Activated CD4-positive, alpha-beta T cell treated with anti-CD3 and anti-CD28 coated beads, Interleukin-2, amount 10 ng/mL, durations not matched to agents 7 days and 5 days (primary cell): ENCODE measurements at regions of chr4 and their contacts with region 1.

Region 1: DNA sequence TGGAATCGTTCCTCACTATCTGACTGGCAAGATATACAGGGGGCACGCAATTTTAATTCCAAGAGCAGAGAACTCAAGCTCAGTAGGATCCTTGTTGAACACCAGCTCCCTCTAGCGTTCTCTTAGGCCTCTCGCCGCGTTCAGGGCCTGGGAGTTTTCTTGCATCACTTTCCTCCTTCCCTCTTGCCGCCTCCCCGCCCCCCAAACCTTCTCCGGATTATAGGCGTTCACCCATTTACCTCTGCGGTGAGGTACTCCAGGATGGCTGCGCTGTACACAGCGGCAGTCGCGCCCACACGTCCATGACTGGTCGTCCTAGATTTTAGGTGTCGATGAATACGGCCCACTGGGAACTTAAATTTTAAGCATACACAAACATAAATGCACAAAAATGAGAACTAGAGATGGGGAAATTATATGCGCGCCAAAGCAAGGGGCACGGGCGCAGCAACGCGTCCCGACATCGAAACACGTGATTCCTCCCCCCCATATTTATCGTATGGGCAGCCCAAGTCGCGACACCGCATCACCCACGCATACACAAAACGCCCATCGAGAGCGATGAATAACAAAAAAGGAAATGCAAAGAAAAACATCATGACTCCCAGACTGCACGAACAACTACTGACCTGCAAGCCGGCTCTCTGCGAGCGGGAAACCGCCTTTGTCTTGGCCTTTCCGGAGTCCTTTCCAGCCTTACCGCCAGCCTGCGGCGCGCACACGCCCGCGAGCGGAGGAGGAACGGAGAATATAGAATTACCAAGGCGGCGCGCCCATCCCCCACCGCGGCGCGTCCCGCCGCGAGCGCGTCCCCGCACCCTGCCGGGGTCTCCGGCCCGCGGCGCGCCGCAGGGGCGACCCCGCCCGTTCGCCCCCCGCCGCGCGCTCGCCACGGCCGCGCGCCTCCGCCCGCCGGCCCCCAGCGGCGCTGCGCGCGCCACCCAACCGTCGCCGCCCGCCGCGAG is 759 bp downstream of the H2AZ1 start:
- DNase-seq: peak; percentile 94
- H3K4me3 Mint-ChIP-seq: no peak overlapping the region
- H3K27ac Mint-ChIP-seq: no peak overlapping the region
- H3K4me1 Mint-ChIP-seq: peaks cover 30% of the 10 kb centered on the region
- H3K27me3 Mint-ChIP-seq: no peaks in the 10 kb centered on the region

Region 2: DNA sequence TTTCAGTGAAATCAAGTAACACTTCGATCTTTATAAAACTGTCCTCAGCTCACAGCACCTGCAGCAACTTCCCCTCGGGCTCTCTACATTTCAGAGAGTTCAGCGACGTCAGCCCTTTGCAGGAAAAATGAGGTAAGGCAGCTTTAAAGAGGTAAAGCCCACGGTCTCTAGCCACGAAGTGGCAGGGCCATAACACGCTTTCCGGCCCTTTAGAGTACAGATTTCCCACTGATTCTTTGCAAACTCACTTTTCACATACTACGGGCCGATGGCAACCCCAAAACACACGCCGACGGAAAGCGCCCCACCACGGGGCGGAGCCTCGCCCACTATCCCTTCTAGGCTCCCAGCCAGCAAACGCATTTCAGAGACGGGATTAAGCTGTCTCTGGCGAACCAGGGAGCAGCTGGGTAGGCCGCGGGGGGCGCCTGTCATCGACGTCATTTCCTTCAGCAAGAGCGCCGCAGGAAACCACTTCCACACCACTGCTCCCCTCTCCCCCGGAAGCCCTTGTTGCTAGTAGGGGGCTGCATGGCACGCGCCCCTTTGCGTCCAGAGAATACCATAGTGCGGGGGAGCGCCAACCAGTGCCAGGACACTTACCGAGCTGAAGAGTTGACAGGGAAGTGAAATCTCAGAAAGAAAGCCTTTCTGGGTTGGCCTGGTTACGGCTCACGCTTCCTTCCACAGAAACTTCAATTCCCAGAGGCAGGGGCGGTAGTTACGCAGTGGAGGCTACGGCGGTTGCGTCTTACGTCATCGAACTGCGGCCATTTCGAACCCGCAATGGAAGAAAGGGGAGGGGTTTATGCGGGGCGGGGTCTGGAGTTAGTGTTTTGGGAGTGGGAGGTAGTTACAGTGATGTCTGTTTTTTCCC is 385.8 kb before region 1 on chr4 and contains the start of gene TRMT10A:
- CTCF ChIA-PET with region 1: interaction called, 13 read pairs
- POLR2A ChIA-PET with region 1: no interaction called
- DNase-seq: peak; percentile 95
- H3K4me3 Mint-ChIP-seq: peak within 1 kb of the TSS; percentile 98
- H3K27ac Mint-ChIP-seq: peak within 1 kb of the TSS; percentile 100
- H3K4me1 Mint-ChIP-seq: peaks cover 34% of the 10 kb centered on the region
- H3K27me3 Mint-ChIP-seq: peaks cover 25% of the 10 kb centered on the region
- total RNA-seq, gene TRMT10A: 7.9 to 10.5 TPM

Region 3: DNA sequence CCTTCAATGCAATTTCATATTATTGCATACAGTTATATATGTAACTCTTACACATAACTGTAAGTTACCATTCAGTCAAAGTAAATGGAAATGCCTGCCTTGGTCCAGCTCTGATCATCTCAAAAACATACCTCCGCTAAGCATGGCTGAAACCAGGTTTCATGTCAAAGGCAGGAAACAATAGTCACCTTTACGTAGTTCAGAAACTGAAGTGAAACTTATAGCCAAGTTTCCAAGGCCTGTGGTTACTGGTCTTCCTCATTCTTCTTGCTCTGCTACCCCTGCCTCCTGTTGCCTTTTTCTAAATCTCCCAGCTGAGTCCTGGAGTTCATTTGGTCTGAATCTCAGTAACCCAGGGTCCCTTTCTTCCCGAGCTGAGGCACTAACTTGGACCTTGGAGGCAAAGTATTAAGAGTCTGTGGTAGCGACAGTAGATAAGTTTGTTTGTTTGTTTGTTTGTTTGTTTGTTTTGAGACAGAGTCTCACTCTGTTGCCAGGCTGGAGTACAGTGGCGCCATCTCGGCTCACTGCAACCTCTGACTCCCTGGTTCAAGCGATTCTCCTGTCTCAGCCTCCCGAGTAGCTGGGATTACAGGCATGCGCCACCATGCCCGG is 101.8 kb before region 1 on chr4:
- CTCF ChIA-PET with region 1: interaction called, 10 read pairs
- POLR2A ChIA-PET with region 1: no interaction called
- DNase-seq: peak; percentile 47
- H3K4me3 Mint-ChIP-seq: peak overlapping the region; percentile 55
- H3K27ac Mint-ChIP-seq: peak overlapping the region; percentile 97
- H3K4me1 Mint-ChIP-seq: peaks cover 77% of the 10 kb centered on the region
- H3K27me3 Mint-ChIP-seq: no peaks in the 10 kb centered on the region

Region 4: GRCh38 chr4:99894161-99894997 is 54.9 kb before region 1 on chr4 and contains the start of gene LAMTOR3:
- CTCF ChIA-PET with region 1: interaction called, 5 read pairs
- POLR2A ChIA-PET with region 1: interaction called, 12 read pairs
- DNase-seq: peak; percentile 93
- H3K4me3 Mint-ChIP-seq: peak within 1 kb of the TSS; percentile 97
- H3K27ac Mint-ChIP-seq: peak within 1 kb of the TSS; percentile 96
- H3K4me1 Mint-ChIP-seq: peaks cover 42% of the 10 kb centered on the region
- H3K27me3 Mint-ChIP-seq: no peaks in the 10 kb centered on the region
- total RNA-seq, gene LAMTOR3: 28.9 to 33.1 TPM

Region 5: DNA sequence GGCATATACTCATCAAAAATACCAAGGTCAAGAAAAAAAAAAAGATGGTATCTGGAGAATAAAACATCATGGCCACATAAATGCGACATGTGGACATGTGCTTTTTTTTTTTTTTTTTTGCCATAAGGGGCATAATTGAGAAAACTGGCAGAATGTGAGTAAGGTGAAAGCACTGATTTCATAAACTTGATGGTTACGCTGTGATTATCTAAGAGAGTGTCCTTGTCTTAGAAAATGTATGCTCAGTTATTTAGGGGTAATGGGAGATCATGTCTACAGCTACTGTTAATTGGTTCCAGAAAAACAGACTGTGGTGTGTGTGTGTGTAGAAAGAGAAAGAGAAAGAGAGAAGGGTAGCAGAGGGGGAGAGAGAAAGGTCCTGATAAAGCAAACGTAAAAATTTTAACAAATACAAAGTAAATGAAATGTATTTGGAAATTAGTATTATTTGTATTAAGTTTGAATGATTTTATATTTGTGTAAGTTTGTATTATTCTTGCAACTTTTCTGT is 11.0 kb before region 1 on chr4:
- CTCF ChIA-PET with region 1: interaction called, 16 read pairs
- POLR2A ChIA-PET with region 1: no interaction called
- DNase-seq: no peak
- H3K4me3 Mint-ChIP-seq: no peak overlapping the region
- H3K27ac Mint-ChIP-seq: no peak overlapping the region
- H3K4me1 Mint-ChIP-seq: peaks cover 26% of the 10 kb centered on the region
- H3K27me3 Mint-ChIP-seq: no peaks in the 10 kb centered on the region